Activated CD4-positive, alpha-beta memory T cell treated with anti-CD3 and anti-CD28 coated beads, Interleukin-2, amount 10 ng/mL, durations not matched to agents 7 days and 5 days (primary cell): ENCODE measurements at regions of chr14 and their contacts with region 1.

Region 1: GRCh38 chr14:54488646-54489317 is at the start of gene GMFB:
- DNase-seq: peak; percentile 92
- H3K4me3 Mint-ChIP-seq: peak within 1 kb of the TSS; percentile 85
- H3K27ac Mint-ChIP-seq: peak within 1 kb of the TSS; percentile 86
- H3K4me1 Mint-ChIP-seq: peaks cover 58% of the 10 kb centered on the region
- H3K27me3 Mint-ChIP-seq: no peaks in the 10 kb centered on the region
- total RNA-seq, gene GMFB: 35.1 to 37.1 TPM

Region 2: DNA sequence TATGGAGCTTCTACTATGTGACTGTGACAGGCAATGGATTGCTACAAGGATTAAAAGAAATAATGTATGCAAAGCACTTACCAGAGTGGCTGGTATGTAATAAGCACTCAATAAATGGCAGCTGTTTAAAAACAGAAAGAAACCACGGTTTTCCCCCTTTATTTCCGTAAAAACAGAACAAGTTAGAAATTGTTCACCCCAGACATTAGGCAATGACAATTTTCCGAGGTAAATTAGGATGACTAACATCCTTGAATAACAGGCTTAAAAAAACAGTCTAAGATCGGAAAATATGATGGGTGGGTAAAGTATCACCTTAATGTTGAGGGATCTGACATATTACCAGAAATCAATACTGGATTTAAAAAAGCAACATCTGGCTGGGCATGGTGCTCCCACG is 26.7 kb before region 1 on chr14:
- CTCF ChIA-PET with region 1: no interaction called
- POLR2A ChIA-PET with region 1: no interaction called
- DNase-seq: no peak
- H3K4me3 Mint-ChIP-seq: no peak overlapping the region
- H3K27ac Mint-ChIP-seq: no peak overlapping the region
- H3K4me1 Mint-ChIP-seq: no peaks in the 10 kb centered on the region
- H3K27me3 Mint-ChIP-seq: no peaks in the 10 kb centered on the region

Region 3: GRCh38 chr14:54503476-54504257 is 14.9 kb after region 1 on chr14:
- CTCF ChIA-PET with region 1: interaction called, 35 read pairs
- POLR2A ChIA-PET with region 1: interaction called, 31 read pairs
- DNase-seq: no peak
- H3K4me3 Mint-ChIP-seq: no peak overlapping the region
- H3K27ac Mint-ChIP-seq: no peak overlapping the region
- H3K4me1 Mint-ChIP-seq: peaks cover 4% of the 10 kb centered on the region
- H3K27me3 Mint-ChIP-seq: peaks cover 20% of the 10 kb centered on the region

Region 4: GRCh38 chr14:54572316-54572715 is 83.5 kb after region 1 on chr14:
- CTCF ChIA-PET with region 1: no interaction called
- POLR2A ChIA-PET with region 1: no interaction called
- DNase-seq: no peak
- H3K4me3 Mint-ChIP-seq: no peak overlapping the region
- H3K27ac Mint-ChIP-seq: no peak overlapping the region
- H3K4me1 Mint-ChIP-seq: peaks cover 8% of the 10 kb centered on the region
- H3K27me3 Mint-ChIP-seq: peaks cover 31% of the 10 kb centered on the region

Region 5: DNA sequence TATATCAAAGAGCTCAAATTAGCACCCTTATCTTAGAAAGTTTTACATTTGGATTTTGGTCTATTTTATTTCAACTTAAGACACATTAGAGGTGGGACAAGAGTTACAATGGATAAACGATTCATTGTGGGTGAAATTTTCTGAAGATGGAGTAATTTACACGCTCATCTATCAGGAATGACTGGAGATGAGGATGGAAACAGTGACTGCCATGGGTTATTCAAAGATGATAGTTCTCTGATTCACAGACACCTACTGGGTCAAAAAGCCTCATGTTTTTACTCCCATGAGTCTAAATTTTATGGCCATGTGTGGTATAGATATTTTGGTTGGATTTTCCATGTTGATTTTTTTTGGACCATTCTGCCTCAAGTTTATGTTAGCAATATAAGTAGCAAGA is 100.3 kb after region 1 on chr14:
- CTCF ChIA-PET with region 1: no interaction called
- POLR2A ChIA-PET with region 1: no interaction called
- DNase-seq: no peak
- H3K4me3 Mint-ChIP-seq: no peak overlapping the region
- H3K27ac Mint-ChIP-seq: no peak overlapping the region
- H3K4me1 Mint-ChIP-seq: peaks cover 15% of the 10 kb centered on the region
- H3K27me3 Mint-ChIP-seq: peaks cover 19% of the 10 kb centered on the region